Gastrocnemius medialis (tissue), 4 donors: ENCODE measurements at regions of chr7 and their contacts with region 1.

Region 1: GRCh38 chr7:22103255-22103969 is 157.7 kb upstream of the CDCA7L start:
- DNase-seq: peak; percentile 15 to 31
- ATAC-seq: peak in 1 of 2 donors; percentile 72
- H3K4me3 ChIP-seq: no peak overlapping the region
- H3K27ac ChIP-seq: no peak overlapping the region
- H3K4me1 ChIP-seq: peaks cover 0 to 3% of the 10 kb centered on the region in 2 donors
- H3K27me3 ChIP-seq: no peaks in the 10 kb centered on the region
- CTCF ChIP-seq: peak; percentile 40 to 70 (median 56)
- POLR2A ChIP-seq: no peak

Region 2: GRCh38 chr7:22295402-22296264 is 192.2 kb after region 1 on chr7:
- in situ Hi-C with region 1: loop called in 1 of 4 experiments (anchors 25 kb)
- intact Hi-C with region 1: no loop called
- DNase-seq: no peak
- ATAC-seq: peak; percentile 33 to 42
- H3K4me3 ChIP-seq: no peak overlapping the region
- H3K27ac ChIP-seq: peak overlapping the region in 2 of 4 donors; percentile 2 to 22
- H3K4me1 ChIP-seq: no peaks in the 10 kb centered on the region
- H3K27me3 ChIP-seq: no peaks in the 10 kb centered on the region
- CTCF ChIP-seq: no peak
- POLR2A ChIP-seq: no peak